OCI-LY7 (cell line): ENCODE measurements at regions of chr15 and their contacts with region 1.

Region 1: GRCh38 chr15:58770857-58771620 is at the start of gene MINDY2:
- DNase-seq: peak; percentile 99
- H3K4me3 ChIP-seq: peak within 1 kb of the TSS; percentile 90
- H3K27ac ChIP-seq: peak within 1 kb of the TSS; percentile 59
- H3K4me1 ChIP-seq: peaks cover 31% of the 10 kb centered on the region
- CTCF ChIP-seq: peak; percentile 53; the same call in 1 of the 2 replicates
- total RNA-seq, gene MINDY2: 9.9 and 10.5 TPM in 2 replicates

Region 2: DNA sequence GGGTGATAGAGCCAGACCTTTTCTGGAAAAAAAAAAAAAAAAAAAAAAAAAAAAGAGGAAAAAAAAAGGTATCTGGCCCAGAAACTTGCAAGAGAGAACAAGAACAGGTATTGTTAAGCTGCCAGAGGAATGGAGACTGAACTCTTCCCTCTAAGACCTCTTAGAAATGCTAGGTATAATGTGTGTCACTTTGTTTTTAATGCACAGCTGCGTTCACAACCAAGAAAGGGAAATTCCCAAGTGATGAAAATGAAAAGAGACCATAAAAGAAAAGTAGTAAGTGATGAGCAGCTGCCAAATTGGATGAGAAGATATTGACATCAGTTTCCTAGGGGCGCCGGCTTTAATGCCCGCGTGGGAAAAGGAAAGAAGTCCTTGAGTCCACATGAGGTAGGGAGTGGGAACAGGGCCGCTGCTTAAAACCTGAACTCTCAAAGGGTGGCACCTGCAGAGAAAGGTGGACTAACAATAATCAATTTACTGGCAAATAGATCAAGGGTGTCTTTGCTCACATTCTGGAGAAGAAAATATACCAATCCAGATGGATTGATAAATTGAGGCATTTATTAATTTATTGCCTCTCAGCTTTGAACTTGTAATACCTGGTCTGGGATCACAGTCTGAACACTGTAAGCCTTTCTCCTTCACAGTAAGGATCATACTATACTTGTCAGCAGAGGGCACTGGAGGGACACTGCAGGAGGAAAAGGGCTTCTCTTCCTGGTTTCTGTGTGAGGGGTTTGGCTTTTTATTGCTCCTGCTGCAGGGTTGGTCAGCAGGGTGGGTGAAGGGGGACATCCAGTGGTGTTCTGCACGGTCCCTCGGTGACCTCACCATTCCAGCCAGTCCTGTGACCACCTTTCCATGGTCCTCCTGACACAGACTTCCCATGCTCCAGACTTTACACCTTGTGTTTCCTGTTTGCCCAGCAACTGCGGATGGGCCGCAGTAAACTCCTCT is 501.3 kb before region 1 on chr15:
- CTCF ChIA-PET with region 1: no interaction called
- POLR2A ChIA-PET with region 1: interaction called, 5 read pairs
- intact Hi-C with region 1: loop called (anchors 5 kb)
- DNase-seq: peak; percentile 60
- H3K4me3 ChIP-seq: no peak overlapping the region
- H3K27ac ChIP-seq: no peak overlapping the region
- H3K4me1 ChIP-seq: no peaks in the 10 kb centered on the region
- CTCF ChIP-seq: peak; percentile 80

Region 3: DNA sequence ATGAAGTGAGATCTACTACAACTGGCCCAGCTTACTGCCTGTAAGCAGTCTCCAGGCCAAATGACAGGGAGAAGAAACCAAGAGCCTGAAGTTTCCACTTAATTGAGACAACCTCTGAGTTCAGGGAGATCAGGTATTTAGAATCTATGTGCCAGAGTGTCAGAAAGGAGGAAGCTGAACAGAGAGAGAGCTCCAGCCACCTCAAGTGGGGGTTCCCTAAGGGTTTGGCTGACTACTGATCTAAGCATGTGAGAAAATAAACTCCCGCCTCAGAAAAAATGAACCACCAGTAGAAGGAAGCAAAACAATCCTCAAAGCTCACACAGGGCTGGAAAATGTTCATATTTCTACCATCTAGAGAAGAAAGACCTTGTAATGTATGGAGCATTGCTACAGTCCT is 46.6 kb before region 1 on chr15:
- CTCF ChIA-PET with region 1: no interaction called
- POLR2A ChIA-PET with region 1: interaction called, 12 read pairs
- intact Hi-C with region 1: no loop called
- DNase-seq: peak; percentile 67
- H3K4me3 ChIP-seq: no peak overlapping the region
- H3K27ac ChIP-seq: peak overlapping the region; percentile 40
- H3K4me1 ChIP-seq: peaks cover 40% of the 10 kb centered on the region
- CTCF ChIP-seq: no peak

Region 4: DNA sequence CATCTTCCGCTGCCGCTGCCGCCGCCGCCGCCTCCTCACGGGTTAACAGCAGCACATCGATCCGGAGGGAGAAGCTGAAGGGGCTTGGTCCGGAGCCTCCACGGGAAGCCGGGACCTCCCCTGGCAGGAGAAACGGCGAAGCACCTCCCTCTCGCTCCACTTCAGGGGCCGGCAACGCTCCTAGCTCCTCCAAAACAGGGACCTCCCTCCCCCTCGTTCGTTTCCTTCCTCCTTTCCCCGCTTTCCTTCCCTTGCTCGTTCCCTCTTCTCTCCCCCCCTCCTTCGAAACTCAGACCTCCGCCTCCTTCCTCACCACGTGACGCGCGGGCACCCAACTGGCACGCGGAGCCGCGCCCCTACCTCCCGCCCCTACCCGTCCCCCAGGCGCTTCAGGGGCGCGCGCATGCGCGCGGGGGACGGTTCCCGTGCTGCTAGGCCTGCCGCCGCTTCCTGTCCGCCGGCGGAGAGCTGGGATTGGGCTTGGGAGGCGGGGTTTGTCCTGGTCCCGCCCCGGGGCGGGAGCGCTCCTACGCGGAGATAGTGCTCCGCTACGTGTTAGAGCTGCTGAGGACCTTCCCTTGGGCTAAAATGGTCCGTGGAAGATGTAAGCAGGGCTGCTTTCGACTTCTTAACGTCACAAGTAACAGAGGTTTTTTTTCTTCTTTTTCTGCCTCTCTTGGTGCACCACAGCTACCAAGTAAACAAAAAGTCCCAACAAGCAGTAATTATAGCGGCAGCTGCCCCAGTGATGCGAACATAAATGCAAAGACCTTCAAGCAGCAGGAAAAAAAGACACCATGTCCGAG is 21.3 kb before region 1 on chr15 and contains the start of gene ADAM10:
- CTCF ChIA-PET with region 1: interaction called, 10 read pairs
- POLR2A ChIA-PET with region 1: interaction called, 30 read pairs
- intact Hi-C with region 1: loop called (anchors 1 kb)
- DNase-seq: peak; percentile 99
- H3K4me3 ChIP-seq: peak within 1 kb of the TSS; percentile 87
- H3K27ac ChIP-seq: peak within 1 kb of the TSS; percentile 84
- H3K4me1 ChIP-seq: peaks cover 32% of the 10 kb centered on the region
- CTCF ChIP-seq: no peak
- total RNA-seq, gene ADAM10: 61.9 and 68.0 TPM in 2 replicates

Region 5: GRCh38 chr15:58758138-58758537 is 12.9 kb before region 1 on chr15:
- CTCF ChIA-PET with region 1: interaction called, 9 read pairs
- POLR2A ChIA-PET with region 1: interaction called, 19 read pairs
- intact Hi-C with region 1: no loop called
- DNase-seq: peak; percentile 22
- H3K4me3 ChIP-seq: no peak overlapping the region
- H3K27ac ChIP-seq: no peak overlapping the region
- H3K4me1 ChIP-seq: no peaks in the 10 kb centered on the region
- CTCF ChIP-seq: peak; percentile 71

Region 6: DNA sequence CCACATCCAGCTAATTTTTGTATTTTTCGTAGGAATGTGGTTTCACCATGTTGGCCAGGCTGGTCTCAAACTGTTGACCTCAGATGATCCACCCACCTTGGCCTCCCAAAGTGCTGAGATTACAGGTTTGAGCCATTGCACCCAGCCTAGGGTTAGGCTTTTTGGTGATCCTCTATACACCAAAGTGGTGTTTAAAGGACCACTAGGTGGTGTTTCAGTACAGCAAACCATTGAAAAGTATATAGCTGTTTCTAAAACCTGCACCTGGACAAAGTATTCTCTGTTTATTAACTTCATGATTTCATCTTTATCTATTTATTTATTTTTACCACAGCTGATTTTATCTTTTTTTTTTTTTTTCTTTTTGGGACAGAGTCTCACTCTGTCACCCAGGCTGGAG is 68.4 kb after region 1 on chr15:
- CTCF ChIA-PET with region 1: no interaction called
- POLR2A ChIA-PET with region 1: no interaction called
- intact Hi-C with region 1: no loop called
- DNase-seq: peak; percentile 27
- H3K4me3 ChIP-seq: no peak overlapping the region
- H3K27ac ChIP-seq: no peak overlapping the region
- H3K4me1 ChIP-seq: no peaks in the 10 kb centered on the region
- CTCF ChIP-seq: peak; percentile 67

Region 7: DNA sequence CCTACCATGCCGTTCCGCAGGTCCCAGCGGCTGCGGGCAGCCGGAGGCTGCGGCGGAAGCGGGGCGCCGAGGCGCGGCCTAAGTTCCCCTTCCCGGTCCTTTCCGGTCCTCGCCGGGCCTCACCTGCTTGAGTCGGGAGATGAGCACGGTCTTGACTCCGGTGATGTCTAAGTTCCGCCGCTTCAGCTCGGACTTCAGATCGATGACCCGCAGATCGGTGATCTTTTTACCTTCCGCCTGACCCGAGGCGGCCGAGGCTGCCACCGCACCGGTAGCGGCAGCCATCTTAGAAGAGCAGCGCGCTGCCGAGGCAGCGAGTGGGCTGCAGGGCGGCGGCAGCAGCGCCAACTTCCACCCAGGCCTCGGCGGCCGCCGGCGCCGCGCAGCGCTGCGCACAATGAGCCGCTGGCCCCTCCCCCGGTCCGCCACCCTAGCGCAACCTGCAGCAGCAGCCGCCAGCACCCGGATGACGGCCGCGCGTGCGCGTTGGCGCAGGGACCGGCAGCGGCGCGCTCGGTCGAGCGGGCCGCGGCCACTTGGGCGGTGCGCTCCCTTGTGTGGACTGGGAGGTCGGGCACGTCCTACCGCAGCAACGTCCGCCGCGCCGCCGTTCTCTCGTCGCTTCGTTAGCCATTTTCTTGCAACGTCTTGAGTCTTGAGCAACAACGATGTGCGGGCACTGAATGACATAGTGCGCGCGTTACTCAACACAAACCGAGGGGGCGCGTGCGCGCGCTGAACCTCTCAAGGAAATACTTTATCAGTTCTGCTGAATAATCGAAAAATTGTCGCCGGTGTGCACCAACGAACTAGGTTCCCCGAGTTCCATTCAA is 162.5 kb after region 1 on chr15 and contains the start of gene SLTM:
- CTCF ChIA-PET with region 1: no interaction called
- POLR2A ChIA-PET with region 1: interaction called, 12 read pairs
- intact Hi-C with region 1: loop called (anchors 2 kb)
- DNase-seq: peak; percentile 95
- H3K4me3 ChIP-seq: peak within 1 kb of the TSS; percentile 77
- H3K27ac ChIP-seq: peak within 1 kb of the TSS; percentile 92
- H3K4me1 ChIP-seq: peaks cover 20% of the 10 kb centered on the region
- CTCF ChIP-seq: peak; percentile 58
- total RNA-seq, gene SLTM: 103 and 158 TPM in 2 replicates